Dorsolateral prefrontal cortex (tissue), 120 donors: ENCODE measurements at regions of chr12 and their contacts with region 1.

Region 1: GRCh38 chr12:70576346-70577282 is 60.6 kb downstream of the PTPRB start:
- DNase-seq: peak in 1 of 10 donors; percentile 39
- H3K4me3 ChIP-seq: peak overlapping the region in 26 of 59 donors; percentile 0 to 43 (median 26)
- H3K27ac ChIP-seq: peak overlapping the region in 53 of 59 donors; percentile 7 to 88 (median 63)
- H3K27me3 ChIP-seq: no peaks in the 10 kb centered on the region
- CTCF ChIP-seq: peak; percentile 77 to 99 (median 90)

Region 2: GRCh38 chr12:69900720-69901131 is 675.9 kb before region 1 on chr12:
- intact Hi-C with region 1: loop called (anchors 2 kb)
- DNase-seq: peak in 7 of 10 donors; percentile 57 to 88 (median 70)
- H3K4me3 ChIP-seq: peak overlapping the region in 1 of 59 donors; percentile 6
- H3K27ac ChIP-seq: peak overlapping the region in 8 of 59 donors; percentile 2 to 82 (median 55)
- H3K27me3 ChIP-seq: no peaks in the 10 kb centered on the region
- CTCF ChIP-seq: peak; percentile 79 to 95 (median 90)

Region 3: DNA sequence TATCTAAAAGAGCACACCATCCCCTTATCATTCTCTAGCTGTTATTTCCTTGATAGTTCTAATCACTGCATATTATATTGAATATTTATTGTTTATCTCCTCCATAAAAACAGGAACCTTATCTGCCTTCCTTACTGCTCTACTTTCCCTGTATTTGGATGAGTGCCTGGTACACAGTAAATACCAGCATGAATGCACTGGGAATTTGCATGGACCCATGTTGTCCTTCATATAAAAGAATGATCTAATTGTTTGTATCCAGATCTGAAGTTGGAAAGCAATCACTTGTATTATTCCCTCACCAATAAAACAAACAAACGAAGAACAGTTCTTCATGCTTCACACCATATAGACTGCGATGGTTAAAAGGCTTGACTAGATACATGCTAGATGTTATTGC is 348.7 kb before region 1 on chr12:
- intact Hi-C with region 1: no loop called
- DNase-seq: no peak
- H3K4me3 ChIP-seq: no peak overlapping the region
- H3K27ac ChIP-seq: peak overlapping the region in 40 of 59 donors; percentile 2 to 75 (median 44)
- H3K27me3 ChIP-seq: no peaks in the 10 kb centered on the region
- CTCF ChIP-seq: no peak

Region 4: GRCh38 chr12:70242695-70243509 is 333.7 kb before region 1 on chr12 and contains the start of gene CNOT2:
- intact Hi-C with region 1: loop called (anchors 5 to 10 kb)
- DNase-seq: peak; percentile 79 to 90 (median 85)
- H3K4me3 ChIP-seq: peak within 1 kb of the TSS; percentile 70 to 99 (median 93)
- H3K27ac ChIP-seq: peak within 1 kb of the TSS; percentile 82 to 99 (median 95)
- H3K27me3 ChIP-seq: no peaks in the 10 kb centered on the region
- CTCF ChIP-seq: peak in 19 of 56 donors; percentile 2 to 29 (median 12)
- total RNA-seq, gene CNOT2: 63.7 to 156 (median 84.5) TPM

Region 5: DNA sequence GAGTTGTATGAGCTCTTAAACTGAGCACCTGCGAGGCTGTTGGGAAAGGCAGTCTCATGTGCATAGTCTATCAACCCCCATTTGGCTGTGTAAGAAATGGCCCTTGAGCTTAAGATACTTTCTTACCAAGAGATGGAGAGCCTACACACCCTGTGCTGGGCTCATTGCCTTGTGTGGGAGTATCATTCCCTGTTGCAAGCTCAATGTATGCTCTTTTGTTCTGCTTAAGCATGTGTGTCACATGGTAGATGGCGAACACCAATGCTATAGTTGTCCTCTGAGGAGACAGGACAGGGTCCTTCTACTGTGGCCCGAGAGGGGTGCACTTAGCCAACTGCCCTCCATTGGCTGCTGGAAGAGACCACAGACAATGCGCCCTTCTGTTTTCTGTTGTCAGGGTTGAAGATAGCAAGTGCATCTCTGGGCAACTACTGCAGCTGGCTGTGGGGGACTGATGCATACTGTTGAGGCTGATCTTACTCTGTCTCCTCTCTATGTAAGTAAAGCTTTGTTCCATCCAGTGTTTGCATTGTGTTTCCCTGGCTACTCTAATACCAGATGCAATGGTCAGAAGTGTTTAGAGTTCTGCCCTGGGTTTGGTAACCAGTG is 18.9 kb before region 1 on chr12:
- intact Hi-C with region 1: loop called in 1 of 2 experiments (anchors 1 kb)
- DNase-seq: peak; percentile 17 to 97 (median 86)
- H3K4me3 ChIP-seq: peak overlapping the region in 16 of 59 donors; percentile 1 to 45 (median 12)
- H3K27ac ChIP-seq: peak overlapping the region; percentile 69 to 99 (median 91)
- H3K27me3 ChIP-seq: no peaks in the 10 kb centered on the region
- CTCF ChIP-seq: peak in 13 of 56 donors; percentile 1 to 25 (median 11)